H1 (cell line): ENCODE measurements at regions of chr2 and their contacts with region 1.

Region 1: GRCh38 chr2:216606551-216607276 is 26.5 kb upstream of the IGFBP2 start:
- DNase-seq: peak in 1 of 2 experiments; percentile 71
- H3K4me3 ChIP-seq: peak overlapping the region in 2 of 4 experiments; percentile 26 to 49; a peak in 3 of 8 replicates
- H3K27ac ChIP-seq: no peak overlapping the region; the same call in 1 of the 2 replicates
- H3K4me1 ChIP-seq: peaks cover 11 to 22% (median 20%) of the 10 kb centered on the region in 4 experiments
- H3K27me3 ChIP-seq: peaks cover 0 to 3% (median 2%) of the 10 kb centered on the region in 4 experiments; a peak in 2 of 7 replicates
- CTCF ChIP-seq: no peak
- EP300 ChIP-seq: no peak
- POLR2A ChIP-seq: no peak
- RAD21 ChIP-seq: no peak

Region 2: DNA sequence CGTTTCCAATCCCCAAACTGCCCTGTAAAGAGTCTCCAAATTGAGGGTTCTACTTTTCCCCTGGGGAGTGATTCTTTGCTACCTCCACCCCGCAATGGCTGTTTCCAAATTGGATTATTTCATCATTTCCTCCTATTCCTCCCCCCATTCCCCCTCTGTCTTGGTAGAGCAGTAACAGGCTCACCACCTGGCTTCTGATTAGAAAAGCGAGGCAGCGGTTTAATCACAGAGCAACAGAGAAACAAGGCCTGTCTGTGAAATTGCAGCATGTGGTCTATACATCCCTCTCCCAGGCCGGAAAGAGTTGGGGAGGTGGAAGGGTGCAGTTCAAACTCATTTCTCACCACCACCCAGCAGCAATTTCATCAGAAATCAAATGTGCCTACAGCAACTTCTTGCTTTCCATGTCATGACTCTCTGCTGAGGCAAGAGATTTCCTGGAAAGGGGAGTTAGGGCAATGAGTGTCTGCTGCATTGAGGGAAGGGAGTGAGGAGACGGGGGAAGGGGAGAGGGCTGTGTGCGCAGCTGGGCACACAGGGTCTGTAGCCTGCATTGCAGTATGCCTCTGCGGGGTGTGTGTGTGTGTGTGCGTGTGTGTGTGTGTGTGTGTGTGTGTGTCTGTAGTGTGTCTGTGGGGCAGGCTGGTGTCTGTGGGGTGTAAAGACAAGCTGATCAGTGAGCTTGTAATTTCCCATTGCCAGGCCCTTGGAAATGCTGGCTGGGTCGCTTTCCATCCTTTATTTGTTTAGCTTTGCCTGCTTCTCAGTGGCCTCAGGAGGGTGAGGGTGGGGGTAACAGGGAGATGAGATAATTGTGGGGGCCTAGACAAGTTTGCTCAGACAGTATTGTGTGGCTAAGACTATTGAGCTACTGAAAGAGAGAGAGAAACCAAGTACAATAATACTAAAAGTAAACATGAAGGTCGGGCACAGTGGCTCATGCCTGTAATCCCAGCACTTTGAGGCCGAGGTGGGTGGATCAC is 13.0 kb after region 1 on chr2:
- CTCF ChIA-PET with region 1: interaction called, 11 read pairs
- POLR2A ChIA-PET with region 1: interaction called, 10 read pairs
- DNase-seq: peak in 1 of 2 experiments; percentile 57
- H3K4me3 ChIP-seq: no peak overlapping the region
- H3K27ac ChIP-seq: no peak overlapping the region; the same call in 1 of the 2 replicates
- H3K4me1 ChIP-seq: peaks cover 10 to 17% (median 14%) of the 10 kb centered on the region in 4 experiments
- H3K27me3 ChIP-seq: no peaks in the 10 kb centered on the region; a peak in 1 of 7 replicates
- CTCF ChIP-seq: no peak
- EP300 ChIP-seq: no peak
- POLR2A ChIP-seq: no peak
- RAD21 ChIP-seq: no peak